Psoas muscle (tissue), 8 donors: ENCODE measurements at regions of chr6 and their contacts with region 1.

Region 1: GRCh38 chr6:132483779-132484679 is 28.9 kb downstream of the STX7 start:
- DNase-seq: no peak
- ATAC-seq: peak; percentile 52 to 94 (median 68)
- H3K4me3 ChIP-seq: no peak overlapping the region
- H3K27ac ChIP-seq: no peak overlapping the region
- H3K4me1 ChIP-seq: no peaks in the 10 kb centered on the region
- H3K27me3 ChIP-seq: no peaks in the 10 kb centered on the region
- CTCF ChIP-seq: peak; percentile 77

Region 2: DNA sequence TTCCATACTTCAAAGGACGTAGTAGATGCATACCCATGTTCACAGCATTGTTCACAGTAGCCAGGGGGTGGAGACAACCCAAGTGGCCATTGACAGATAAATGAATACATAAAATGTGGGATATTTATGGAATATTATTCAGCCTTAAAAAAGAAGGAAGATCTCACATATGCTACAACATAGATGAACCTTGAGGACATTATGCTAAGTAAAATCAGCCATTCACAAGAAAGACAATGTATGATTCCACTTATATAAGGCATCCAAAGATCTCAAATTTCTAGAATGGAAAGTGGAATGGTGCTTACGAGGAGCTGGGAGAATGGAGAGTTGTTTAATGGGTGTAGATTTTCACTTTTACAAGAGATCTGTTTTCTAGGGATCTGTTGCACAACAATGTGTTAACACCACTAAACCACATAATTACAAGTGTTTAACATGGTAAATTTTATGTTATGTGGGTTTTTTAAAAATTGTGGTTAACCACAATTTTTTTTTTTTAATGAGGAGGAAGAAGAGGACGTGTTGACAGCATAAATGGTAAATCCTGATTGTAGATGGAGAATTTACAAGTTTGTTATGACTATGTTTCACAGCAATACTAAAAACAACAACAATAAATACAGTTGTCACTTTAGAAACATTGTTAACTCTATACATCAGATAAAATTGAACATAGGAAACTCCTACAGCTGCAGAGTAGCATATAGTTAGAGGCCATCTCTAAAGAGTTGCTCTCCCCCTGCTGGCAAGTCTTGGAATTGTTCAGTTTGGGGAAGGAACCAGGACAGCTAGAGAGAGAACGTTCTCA is 574.4 kb before region 1 on chr6:
- intact Hi-C with region 1: loop called in 1 of 2 experiments (anchors 10 kb)
- DNase-seq: peak in 1 of 2 donors; percentile 48
- ATAC-seq: peak; percentile 59 to 85 (median 71)
- H3K4me3 ChIP-seq: no peak overlapping the region
- H3K27ac ChIP-seq: no peak overlapping the region
- H3K4me1 ChIP-seq: no peaks in the 10 kb centered on the region
- H3K27me3 ChIP-seq: peaks cover 0 to 6% (median 4%) of the 10 kb centered on the region in 3 donors
- CTCF ChIP-seq: peak; percentile 89

Region 3: DNA sequence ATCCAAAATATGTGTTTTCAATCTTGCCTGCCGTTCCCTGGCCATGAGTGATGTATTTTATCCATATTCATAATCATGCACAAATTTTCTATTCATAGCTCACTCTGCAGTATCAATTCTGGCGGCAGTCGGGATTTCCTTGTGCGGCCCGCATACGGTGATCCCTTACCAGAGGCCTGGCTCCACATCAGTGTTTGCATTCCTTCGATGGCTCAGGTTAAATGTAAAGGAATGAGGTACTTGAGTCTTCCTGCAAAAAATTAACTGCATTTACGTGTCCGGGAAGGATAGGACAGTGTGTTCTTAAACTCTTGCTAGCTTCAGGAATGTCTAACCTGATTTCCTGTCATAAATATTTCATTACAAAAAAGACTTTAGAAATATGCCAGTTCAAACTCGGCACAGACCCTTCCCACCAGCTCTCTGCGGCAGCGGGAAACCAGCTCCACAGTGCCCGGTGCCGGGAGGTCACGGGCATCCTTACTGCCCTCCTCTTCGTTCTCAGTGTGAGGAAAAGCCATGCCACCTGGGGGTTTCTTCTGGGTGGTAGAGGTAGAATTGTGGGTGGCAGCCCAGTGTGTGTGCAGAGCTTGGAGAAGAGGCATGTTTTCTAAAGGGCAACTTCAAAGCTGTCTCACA is 237.3 kb before region 1 on chr6:
- intact Hi-C with region 1: no loop called
- DNase-seq: no peak
- ATAC-seq: no peak
- H3K4me3 ChIP-seq: no peak overlapping the region
- H3K27ac ChIP-seq: no peak overlapping the region
- H3K4me1 ChIP-seq: no peaks in the 10 kb centered on the region
- H3K27me3 ChIP-seq: no peaks in the 10 kb centered on the region
- CTCF ChIP-seq: no peak

Region 4: GRCh38 chr6:132279592-132280139 is 204.4 kb before region 1 on chr6:
- intact Hi-C with region 1: loop called (anchors 2 kb)
- DNase-seq: peak; percentile 70 to 81
- ATAC-seq: peak; percentile 73 to 95 (median 85)
- H3K4me3 ChIP-seq: peak overlapping the region; percentile 61
- H3K27ac ChIP-seq: no peak overlapping the region
- H3K4me1 ChIP-seq: no peaks in the 10 kb centered on the region
- H3K27me3 ChIP-seq: peaks cover 0 to 2% (median 0%) of the 10 kb centered on the region in 3 donors
- CTCF ChIP-seq: peak; percentile 84

Region 5: DNA sequence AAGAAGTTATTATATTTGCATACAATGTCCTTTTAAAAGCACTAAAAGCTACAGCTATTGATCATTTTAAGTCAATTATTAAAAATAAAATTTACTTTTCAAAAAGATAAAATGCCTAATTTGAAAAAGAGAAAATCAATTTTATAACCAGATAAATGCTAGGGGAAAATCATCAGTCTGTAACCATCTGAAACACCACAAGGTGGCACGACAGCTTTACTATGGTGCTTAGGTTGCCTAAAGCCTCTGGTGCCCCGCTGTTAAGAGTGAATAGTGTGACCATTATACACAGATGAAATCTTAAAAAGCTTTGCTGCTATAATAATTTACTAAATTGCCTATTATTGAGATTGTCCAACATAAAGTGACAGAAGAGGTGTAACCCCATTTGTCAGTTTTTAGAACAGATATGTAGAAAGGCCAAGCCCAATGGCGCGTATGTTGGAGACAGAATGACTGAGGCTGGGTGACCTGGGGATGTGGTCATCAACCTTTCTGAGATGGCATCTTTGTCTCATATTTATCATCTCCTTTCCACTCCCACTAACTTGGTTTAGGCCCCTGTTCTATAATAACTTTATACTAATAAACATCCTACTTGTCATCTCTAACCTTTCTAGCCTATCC is 183.6 kb before region 1 on chr6:
- intact Hi-C with region 1: loop called in 1 of 2 experiments (anchors 5 kb)
- DNase-seq: no peak
- ATAC-seq: peak in 1 of 4 donors; percentile 54
- H3K4me3 ChIP-seq: no peak overlapping the region
- H3K27ac ChIP-seq: no peak overlapping the region
- H3K4me1 ChIP-seq: no peaks in the 10 kb centered on the region
- H3K27me3 ChIP-seq: no peaks in the 10 kb centered on the region
- CTCF ChIP-seq: peak; percentile 45

Region 6: DNA sequence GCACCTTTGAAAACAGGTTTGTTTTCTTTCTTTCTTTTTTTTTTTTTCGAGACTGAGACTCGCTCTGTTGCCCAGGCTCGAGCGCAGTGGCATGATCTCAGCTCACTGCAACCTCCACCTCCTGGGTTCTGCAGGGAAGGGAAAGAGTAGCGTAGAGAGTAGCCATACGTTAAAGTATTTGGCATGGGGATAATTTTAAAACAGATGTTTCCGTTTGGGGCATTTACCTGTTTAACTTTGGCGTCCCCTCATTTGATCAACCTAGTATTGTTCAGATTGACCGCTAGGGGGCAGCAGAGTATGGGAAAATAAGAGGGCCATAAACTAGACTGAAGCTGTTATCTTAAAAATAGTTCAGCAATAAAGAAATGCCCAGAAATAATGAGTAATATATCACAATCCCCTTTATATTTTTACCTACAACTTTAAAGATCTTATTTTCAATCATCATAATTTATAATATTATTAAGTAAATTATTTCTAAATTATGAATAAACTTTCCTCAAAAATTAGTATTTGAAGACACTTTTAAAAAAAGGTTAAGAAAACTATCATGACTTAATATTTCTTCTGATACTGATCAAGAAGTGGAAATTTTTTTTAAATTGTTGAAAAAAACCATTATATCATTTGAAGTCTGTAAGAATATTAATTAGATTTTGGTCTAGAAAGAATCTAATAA is 46.4 kb after region 1 on chr6:
- intact Hi-C with region 1: no loop called
- DNase-seq: peak in 1 of 2 donors; percentile 39
- ATAC-seq: peak in 3 of 4 donors; percentile 70 to 89 (median 77)
- H3K4me3 ChIP-seq: peak overlapping the region; percentile 23
- H3K27ac ChIP-seq: no peak overlapping the region
- H3K4me1 ChIP-seq: no peaks in the 10 kb centered on the region
- H3K27me3 ChIP-seq: no peaks in the 10 kb centered on the region
- CTCF ChIP-seq: peak; percentile 85

Region 7: DNA sequence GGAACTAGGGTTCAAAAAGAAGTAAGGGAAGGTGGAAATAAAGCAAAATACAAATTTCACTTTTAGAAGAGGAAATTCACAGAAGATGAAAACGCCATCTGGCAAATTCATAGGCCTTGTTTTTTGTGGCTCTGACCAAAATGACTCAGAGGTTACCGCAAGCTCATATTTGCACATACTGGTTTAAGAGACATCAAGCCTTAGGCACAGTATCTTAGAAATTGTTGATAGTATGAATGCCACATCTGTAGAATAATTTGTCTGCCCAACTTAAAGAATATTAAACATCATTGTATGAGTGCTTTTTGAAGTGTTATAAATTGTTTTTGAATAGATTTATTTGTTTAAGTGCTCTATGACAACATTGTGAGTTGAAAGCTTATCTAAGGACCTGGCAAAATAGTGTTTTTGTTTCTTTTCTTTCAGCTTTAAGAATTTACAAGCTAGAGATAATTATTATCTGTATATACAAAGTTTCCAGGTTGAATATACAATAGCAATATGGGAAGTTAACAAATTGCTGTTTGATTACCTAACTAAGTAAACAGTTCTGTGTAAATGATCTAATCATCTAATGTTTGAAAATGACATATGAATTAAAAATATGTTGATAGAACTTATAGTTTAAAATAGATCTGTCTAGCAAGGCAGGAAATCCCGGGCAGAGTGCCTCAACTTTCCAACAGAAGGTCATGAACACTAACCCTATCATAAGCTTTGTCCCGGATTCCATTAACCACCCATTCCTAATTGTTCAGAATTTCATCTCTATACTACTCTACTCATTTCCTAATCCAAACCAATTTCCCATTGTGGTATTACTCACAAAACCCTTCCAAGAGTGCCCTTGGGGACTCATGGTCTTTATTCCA is 164.6 kb after region 1 on chr6:
- intact Hi-C with region 1: no loop called
- DNase-seq: no peak
- ATAC-seq: no peak
- H3K4me3 ChIP-seq: no peak overlapping the region
- H3K27ac ChIP-seq: no peak overlapping the region
- H3K4me1 ChIP-seq: no peaks in the 10 kb centered on the region
- H3K27me3 ChIP-seq: no peaks in the 10 kb centered on the region
- CTCF ChIP-seq: no peak